Endothelial cell of umbilical vein (primary cell): ENCODE measurements at regions of chr2 and their contacts with region 1.

Region 1: GRCh38 chr2:27807476-27807875 is 36.0 kb downstream of the MRPL33 start:
- DNase-seq: peak; percentile 57
- H3K4me3 ChIP-seq: no peak overlapping the region
- H3K27ac ChIP-seq: no peak overlapping the region
- H3K4me1 ChIP-seq: peaks cover 18% of the 10 kb centered on the region
- H3K27me3 ChIP-seq: no peaks in the 10 kb centered on the region
- CTCF ChIP-seq: peak; percentile 57 to 63
- POLR2A ChIP-seq: no peak

Region 2: GRCh38 chr2:27754138-27754588 is 53.3 kb before region 1 on chr2:
- CTCF ChIA-PET with region 1: interaction called, 3 read pairs
- POLR2A ChIA-PET with region 1: no interaction called
- dilution Hi-C with region 1: no loop called
- intact Hi-C with region 1: loop called (anchors 1 kb)
- DNase-seq: peak; percentile 81
- H3K4me3 ChIP-seq: no peak overlapping the region
- H3K27ac ChIP-seq: no peak overlapping the region
- H3K4me1 ChIP-seq: no peaks in the 10 kb centered on the region
- H3K27me3 ChIP-seq: no peaks in the 10 kb centered on the region
- CTCF ChIP-seq: peak; percentile 94 to 97
- POLR2A ChIP-seq: no peak